ENCODE measurements at regions of chr3 and their contacts with region 1.

Region 1: DNA sequence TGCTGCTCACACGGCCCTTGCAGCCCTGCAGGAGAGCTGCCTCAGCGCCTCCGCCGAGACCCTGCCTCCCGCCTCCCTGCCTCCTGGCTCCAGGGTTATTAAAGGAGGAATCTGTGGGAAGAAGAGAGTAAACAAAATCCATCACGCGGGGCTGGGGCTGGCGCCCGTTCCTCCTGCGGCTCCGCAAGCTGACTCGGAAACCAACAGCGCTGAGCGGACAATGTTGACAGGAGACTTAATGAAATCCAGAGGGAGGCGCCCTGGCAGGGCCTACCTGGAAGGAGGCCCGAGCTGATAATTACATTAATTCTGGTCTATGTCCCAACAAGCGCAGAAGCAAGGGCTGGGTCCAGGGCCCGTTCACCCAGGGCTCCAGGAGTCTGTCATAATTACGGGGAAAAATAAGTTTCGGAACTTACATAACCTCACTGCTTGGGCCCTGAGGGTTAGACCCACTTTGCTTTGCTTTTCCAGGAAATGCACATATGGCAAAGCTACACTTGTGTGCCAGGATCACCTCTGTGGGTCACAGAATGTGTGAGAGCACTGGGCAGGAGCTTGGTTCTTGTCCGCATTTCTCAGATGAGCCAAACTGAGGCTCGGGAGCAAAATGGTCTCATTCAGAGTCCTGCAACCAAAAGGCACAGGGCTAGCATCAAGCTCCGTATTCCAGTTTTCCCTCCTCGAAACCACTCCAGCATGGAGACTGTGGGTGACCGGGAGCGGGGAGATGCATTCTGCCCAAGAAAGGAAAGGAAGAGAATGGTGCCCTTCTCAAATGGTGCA is 43.8 kb upstream of the SLC6A6 start:
- DNase-seq: peak; percentile 89
- H3K4me3 ChIP-seq: peak overlapping the region in 2 of 4 donors; percentile 11 to 15
- H3K27ac ChIP-seq: peak overlapping the region; percentile 17 to 69 (median 59)
- H3K4me1 ChIP-seq: peaks cover 0 to 11% (median 10%) of the 10 kb centered on the region in 4 donors
- H3K27me3 ChIP-seq: no peaks in the 10 kb centered on the region
- CTCF ChIP-seq: no peak
- EP300 ChIP-seq: peak in 2 of 4 donors; percentile 40 to 43
- POLR2A ChIP-seq: no peak

Region 2: GRCh38 chr3:14301558-14301957 is 57.1 kb before region 1 on chr3:
- intact Hi-C with region 1: loop called (anchors 5 kb)
- DNase-seq: peak; percentile 86
- H3K4me3 ChIP-seq: no peak overlapping the region
- H3K27ac ChIP-seq: peak overlapping the region in 3 of 4 donors; percentile 29 to 66 (median 43)
- H3K4me1 ChIP-seq: peaks cover 0 to 46% (median 23%) of the 10 kb centered on the region in 4 donors
- H3K27me3 ChIP-seq: no peaks in the 10 kb centered on the region
- CTCF ChIP-seq: no peak
- EP300 ChIP-seq: peak; percentile 7 to 79 (median 45)
- POLR2A ChIP-seq: no peak

Region 3: DNA sequence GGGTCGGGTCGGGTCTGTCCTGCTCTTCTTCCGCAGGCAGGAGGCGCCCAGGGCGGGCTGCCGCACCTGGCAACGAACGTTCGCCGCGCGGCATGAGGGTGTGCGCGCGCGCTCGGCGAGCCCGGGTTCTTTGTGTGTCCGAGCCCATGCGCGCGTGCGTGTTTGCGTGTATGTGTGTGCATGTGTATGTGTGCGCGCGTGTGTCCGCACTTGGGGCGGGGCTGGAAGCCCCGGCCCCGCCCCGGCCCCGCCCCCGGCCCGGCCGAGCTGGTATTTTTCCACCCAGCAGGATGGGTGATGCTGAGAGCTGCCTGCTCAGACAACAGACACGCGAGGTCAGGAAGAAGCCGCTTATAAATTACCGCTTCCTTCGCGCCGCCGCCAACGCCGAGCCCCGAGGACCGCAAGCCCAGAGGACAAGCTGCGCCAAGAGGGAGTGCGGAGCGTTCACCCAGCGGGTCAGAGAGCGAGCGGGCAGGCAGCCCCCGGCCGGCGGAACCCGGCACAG is 43.7 kb after region 1 on chr3 and contains the start of gene SLC6A6:
- intact Hi-C with region 1: loop called (anchors 5 kb)
- DNase-seq: peak; percentile 97
- H3K4me3 ChIP-seq: peak within 1 kb of the TSS; percentile 39 to 86 (median 58)
- H3K27ac ChIP-seq: peak within 1 kb of the TSS; percentile 72 to 94 (median 81)
- H3K4me1 ChIP-seq: peaks cover 0 to 48% (median 39%) of the 10 kb centered on the region in 4 donors
- H3K27me3 ChIP-seq: no peaks in the 10 kb centered on the region
- CTCF ChIP-seq: peak in 3 of 4 experiments; percentile 23 to 43 (median 38)
- EP300 ChIP-seq: peak in 1 of 4 donors; percentile 43
- POLR2A ChIP-seq: peak in 1 of 2 donors; percentile 18
- total RNA-seq, gene SLC6A6: 6.4 to 19.1 (median 9.1) TPM

Region 4: DNA sequence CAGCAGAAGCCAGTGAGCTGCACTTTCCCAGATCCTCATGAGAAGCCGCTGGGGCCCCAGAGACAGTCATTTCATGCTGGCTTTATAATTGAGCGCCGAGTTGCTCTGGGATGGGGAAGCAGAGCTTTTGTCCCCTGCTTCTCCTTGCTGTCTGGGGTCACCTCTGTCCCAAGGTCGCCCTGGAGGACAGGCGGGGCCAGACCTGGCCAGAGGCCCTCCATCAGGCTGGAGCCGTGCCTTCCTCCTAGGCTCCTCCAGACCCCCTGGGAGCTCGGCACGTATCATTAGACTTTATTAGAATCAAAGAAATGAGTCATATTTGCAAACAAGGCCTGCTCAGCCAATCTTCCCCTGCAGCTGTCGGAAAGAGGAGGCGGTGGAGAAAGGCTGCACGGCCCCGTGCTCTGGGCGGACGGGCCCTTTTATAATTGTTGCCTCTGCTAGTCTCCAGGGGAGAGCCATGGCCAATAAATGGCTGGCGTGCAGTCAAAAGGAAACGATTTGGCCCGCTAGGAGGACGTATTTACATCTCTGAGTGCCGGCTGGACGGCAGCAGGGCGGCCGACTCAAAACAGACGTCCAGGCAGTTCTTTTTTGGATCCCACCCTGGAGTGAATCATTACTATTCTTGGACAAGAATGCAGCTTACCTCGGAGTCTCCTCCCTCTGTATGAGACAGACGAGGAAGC is 94.2 kb after region 1 on chr3:
- intact Hi-C with region 1: loop called (anchors 2 kb)
- DNase-seq: peak; percentile 98
- H3K4me3 ChIP-seq: no peak overlapping the region
- H3K27ac ChIP-seq: peak overlapping the region; percentile 82 to 97 (median 86)
- H3K4me1 ChIP-seq: peaks cover 0 to 45% (median 37%) of the 10 kb centered on the region in 4 donors
- H3K27me3 ChIP-seq: no peaks in the 10 kb centered on the region
- CTCF ChIP-seq: peak in 1 of 4 experiments; percentile 30
- EP300 ChIP-seq: peak; percentile 1 to 84 (median 30)
- POLR2A ChIP-seq: no peak

Region 5: DNA sequence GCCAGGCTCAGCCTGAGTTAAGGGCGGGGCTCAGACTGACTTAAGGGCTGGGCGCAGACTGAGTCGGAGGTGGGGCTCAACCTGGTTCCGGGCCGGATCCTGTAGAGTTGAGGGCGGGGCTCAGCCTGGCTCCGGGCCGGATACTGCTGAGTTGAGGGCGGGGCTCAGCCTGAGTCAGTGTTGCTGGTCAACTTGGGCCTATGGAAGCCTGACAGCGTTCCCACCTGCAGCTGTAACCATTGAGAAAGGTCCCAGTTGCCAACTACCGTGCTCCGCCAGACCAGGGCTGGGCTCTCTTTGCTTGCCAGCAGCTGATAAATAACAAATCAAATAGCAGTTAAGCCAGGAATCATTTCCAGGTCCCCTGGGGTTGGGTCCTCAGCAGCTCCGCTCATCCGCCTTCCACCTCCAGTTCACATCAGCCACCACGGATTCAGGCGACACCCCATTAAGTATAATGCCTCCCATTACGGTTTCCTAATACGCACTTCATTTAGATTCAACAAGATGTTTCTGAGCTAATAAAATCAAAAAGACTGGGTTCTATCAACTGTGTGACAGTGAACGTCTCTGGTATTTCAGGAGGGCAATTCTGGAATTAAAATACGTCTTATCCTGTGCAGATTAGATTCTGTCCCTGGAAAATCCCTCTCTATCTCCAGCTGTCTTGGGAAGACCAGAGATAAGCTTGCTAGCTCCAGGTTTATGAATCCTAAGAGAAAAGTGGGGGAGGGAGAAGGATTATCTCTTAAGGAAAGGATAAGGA is 174.3 kb after region 1 on chr3:
- intact Hi-C with region 1: no loop called
- DNase-seq: no peak
- H3K4me3 ChIP-seq: no peak overlapping the region
- H3K27ac ChIP-seq: no peak overlapping the region
- H3K4me1 ChIP-seq: no peaks in the 10 kb centered on the region
- H3K27me3 ChIP-seq: no peaks in the 10 kb centered on the region
- CTCF ChIP-seq: no peak
- EP300 ChIP-seq: no peak
- POLR2A ChIP-seq: no peak